Colonic mucosa (tissue), 4 donors: ENCODE measurements at regions of chr19 and their contacts with region 1.

Region 1: DNA sequence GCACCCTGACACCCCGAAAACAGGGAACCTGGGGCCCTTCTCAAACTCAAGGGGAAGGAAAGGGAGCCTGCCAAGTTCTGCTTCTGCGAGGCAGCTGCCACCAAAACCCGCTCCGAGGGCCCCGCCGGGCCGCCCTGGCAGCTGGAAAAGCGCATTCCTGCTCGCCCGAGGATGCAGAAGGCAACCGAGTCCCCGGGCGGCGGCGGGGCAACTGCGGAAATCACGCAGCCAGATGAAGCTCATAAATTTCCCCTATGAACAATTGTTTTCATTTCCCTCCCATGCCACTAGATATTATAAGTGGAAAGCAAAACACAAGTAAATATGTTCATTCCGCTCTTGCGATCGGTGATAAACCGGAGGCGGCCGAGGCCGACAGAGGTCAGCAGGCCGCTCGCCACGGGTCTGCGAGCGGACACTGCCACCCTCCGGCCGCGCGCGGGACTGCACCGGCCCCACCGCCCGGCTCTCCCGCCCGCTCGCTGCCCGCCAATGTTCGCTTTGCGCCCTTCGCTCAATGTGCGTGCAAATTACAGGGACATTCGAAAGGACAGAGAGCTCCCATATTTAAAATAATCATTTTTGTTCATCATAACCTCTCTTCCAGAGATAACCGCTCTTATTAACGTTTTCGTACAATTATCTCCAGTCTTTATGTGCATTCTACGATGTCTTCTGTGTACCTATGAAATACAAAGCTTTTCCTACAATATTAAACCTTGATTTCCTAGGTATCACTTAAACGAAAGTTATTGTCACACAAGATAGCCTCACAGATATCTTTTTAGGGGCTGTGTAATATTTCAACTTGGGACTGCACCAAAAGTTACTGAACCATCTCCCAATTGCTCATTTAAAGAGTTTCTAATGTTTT is 120.8 kb upstream of the ZNF507 start:
- DNase-seq: peak; percentile 49
- H3K4me3 ChIP-seq: no peak overlapping the region
- H3K27ac ChIP-seq: no peak overlapping the region
- H3K4me1 ChIP-seq: no peaks in the 10 kb centered on the region
- H3K27me3 ChIP-seq: peaks cover 4% of the 10 kb centered on the region
- CTCF ChIP-seq: peak; percentile 100

Region 2: GRCh38 chr19:30669329-30670010 is 1555.1 kb before region 1 on chr19:
- intact Hi-C with region 1: loop called (anchors 5 kb)
- DNase-seq: peak; percentile 49
- H3K4me3 ChIP-seq: no peak overlapping the region
- H3K27ac ChIP-seq: no peak overlapping the region
- H3K4me1 ChIP-seq: no peaks in the 10 kb centered on the region
- H3K27me3 ChIP-seq: no peaks in the 10 kb centered on the region
- CTCF ChIP-seq: peak; percentile 76

Region 3: GRCh38 chr19:30682999-30683536 is 1541.5 kb before region 1 on chr19:
- intact Hi-C with region 1: loop called (anchors 5 kb)
- DNase-seq: peak; percentile 68
- H3K4me3 ChIP-seq: no peak overlapping the region
- H3K27ac ChIP-seq: no peak overlapping the region
- H3K4me1 ChIP-seq: no peaks in the 10 kb centered on the region
- H3K27me3 ChIP-seq: peaks cover 3% of the 10 kb centered on the region
- CTCF ChIP-seq: peak; percentile 70

Region 4: DNA sequence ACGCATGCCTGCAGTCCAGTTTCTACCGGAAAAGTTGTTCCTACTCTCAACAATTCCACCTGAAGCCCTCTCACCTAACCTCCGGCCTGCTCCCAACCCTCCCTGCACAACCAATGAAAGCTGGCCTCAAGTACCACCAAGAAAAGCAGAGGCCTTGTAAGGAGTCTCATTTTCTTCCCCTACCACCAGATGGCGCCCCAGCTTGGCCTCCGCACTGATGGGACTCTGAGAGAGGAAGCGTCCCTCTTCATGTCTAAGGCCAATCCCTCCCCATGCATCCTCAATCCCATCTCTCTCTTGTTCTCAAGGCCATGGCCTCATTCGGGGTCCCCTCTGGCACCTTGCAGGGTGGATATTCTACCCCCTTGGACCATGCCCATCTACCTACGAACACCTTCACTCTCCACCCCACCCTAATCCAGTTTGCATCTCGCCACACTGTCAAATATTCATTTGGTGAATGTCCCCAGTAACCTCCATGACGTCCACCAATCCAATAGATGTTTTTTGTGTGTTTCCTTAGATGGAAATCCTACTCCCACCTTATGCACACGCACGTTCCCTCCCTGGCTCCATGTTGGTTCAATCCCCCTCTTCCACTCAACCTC is 1439.7 kb before region 1 on chr19:
- intact Hi-C with region 1: loop called (anchors 5 kb)
- DNase-seq: peak; percentile 63
- H3K4me3 ChIP-seq: no peak overlapping the region
- H3K27ac ChIP-seq: no peak overlapping the region
- H3K4me1 ChIP-seq: no peaks in the 10 kb centered on the region
- H3K27me3 ChIP-seq: no peaks in the 10 kb centered on the region
- CTCF ChIP-seq: peak; percentile 57

Region 5: GRCh38 chr19:32201636-32202051 is 23.0 kb before region 1 on chr19:
- intact Hi-C with region 1: no loop called
- DNase-seq: no peak
- H3K4me3 ChIP-seq: no peak overlapping the region
- H3K27ac ChIP-seq: no peak overlapping the region
- H3K4me1 ChIP-seq: no peaks in the 10 kb centered on the region
- H3K27me3 ChIP-seq: no peaks in the 10 kb centered on the region
- CTCF ChIP-seq: no peak